WTC11 (cell line): ENCODE measurements at regions of chr2 and their contacts with region 1.

Region 1: GRCh38 chr2:44770221-44771195 is 171.0 kb upstream of the SIX3 start:
- DNase-seq: peak; percentile 38
- ATAC-seq: peak; percentile 33; the same call in 1 of the 2 replicates
- H3K4me3 Mint-ChIP-seq: no peak overlapping the region
- H3K27ac Mint-ChIP-seq: no peak overlapping the region; the same call in 1 of the 2 replicates
- H3K4me1 Mint-ChIP-seq: peaks cover 71% of the 10 kb centered on the region
- H3K27me3 Mint-ChIP-seq: peaks cover 28% of the 10 kb centered on the region
- CTCF ChIP-seq: no peak

Region 2: GRCh38 chr2:44789971-44790721 is 19.6 kb after region 1 on chr2:
- CTCF ChIA-PET with region 1: interaction called, 18 read pairs
- POLR2A ChIA-PET with region 1: interaction called, 3 read pairs
- DNase-seq: no peak
- ATAC-seq: peak; percentile 81
- H3K4me3 Mint-ChIP-seq: no peak overlapping the region
- H3K27ac Mint-ChIP-seq: peak overlapping the region; percentile 26
- H3K4me1 Mint-ChIP-seq: peaks cover 42% of the 10 kb centered on the region
- H3K27me3 Mint-ChIP-seq: no peaks in the 10 kb centered on the region; the same call in none of the 2 replicates
- CTCF ChIP-seq: no peak

Region 3: GRCh38 chr2:44802777-44803424 is 32.4 kb after region 1 on chr2:
- CTCF ChIA-PET with region 1: interaction called, 11 read pairs
- POLR2A ChIA-PET with region 1: interaction called, 3 read pairs
- DNase-seq: peak; percentile 92
- ATAC-seq: peak; percentile 75
- H3K4me3 Mint-ChIP-seq: peak overlapping the region; percentile 70
- H3K27ac Mint-ChIP-seq: peak overlapping the region; percentile 98
- H3K4me1 Mint-ChIP-seq: peaks cover 82% of the 10 kb centered on the region
- H3K27me3 Mint-ChIP-seq: peaks cover 53% of the 10 kb centered on the region
- CTCF ChIP-seq: no peak

Region 4: DNA sequence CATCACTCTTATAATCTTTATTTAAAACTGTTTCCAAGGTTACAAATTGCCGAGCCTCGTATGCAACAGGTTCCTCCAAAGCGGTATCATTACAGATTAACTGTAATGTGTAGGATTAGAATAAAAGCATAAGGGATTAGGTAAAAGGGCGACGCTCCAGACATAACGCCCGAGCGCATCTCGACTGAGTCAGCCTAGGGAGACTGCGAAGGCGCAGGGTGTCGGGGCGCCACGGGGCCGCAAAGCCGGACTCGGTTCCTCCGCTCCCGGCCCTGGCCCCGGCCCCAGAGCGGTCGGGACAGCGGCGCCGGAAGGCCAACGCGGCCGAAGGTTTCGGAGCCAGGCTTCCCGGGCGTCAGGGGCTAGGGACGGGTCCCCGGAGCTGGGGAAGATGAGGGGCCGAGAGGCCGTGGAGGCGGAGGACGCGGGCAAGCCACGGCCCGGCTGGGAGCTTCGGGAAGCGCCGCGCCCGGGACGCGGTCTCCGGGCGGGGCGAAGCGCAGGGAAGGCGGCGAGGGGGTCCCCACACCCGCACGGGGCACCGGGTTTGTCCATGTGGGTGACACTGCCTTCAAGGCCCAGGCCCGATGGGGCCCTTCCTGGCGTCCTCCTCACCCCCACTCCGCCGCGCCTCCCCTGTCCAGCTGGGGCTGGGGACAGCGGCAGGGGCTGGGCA is 158.1 kb after region 1 on chr2:
- CTCF ChIA-PET with region 1: interaction called, 14 read pairs
- POLR2A ChIA-PET with region 1: no interaction called
- DNase-seq: peak; percentile 58
- ATAC-seq: peak; percentile 8
- H3K4me3 Mint-ChIP-seq: peak overlapping the region; percentile 64
- H3K27ac Mint-ChIP-seq: no peak overlapping the region
- H3K4me1 Mint-ChIP-seq: peaks cover 71% of the 10 kb centered on the region
- H3K27me3 Mint-ChIP-seq: peaks cover 95% of the 10 kb centered on the region
- CTCF ChIP-seq: no peak

Region 5: GRCh38 chr2:44937688-44938240 is 167.3 kb after region 1 on chr2:
- CTCF ChIA-PET with region 1: interaction called, 17 read pairs
- POLR2A ChIA-PET with region 1: interaction called, 4 read pairs
- DNase-seq: peak; percentile 79
- ATAC-seq: peak; percentile 5
- H3K4me3 Mint-ChIP-seq: peak overlapping the region; percentile 77
- H3K27ac Mint-ChIP-seq: no peak overlapping the region
- H3K4me1 Mint-ChIP-seq: peaks cover 41% of the 10 kb centered on the region
- H3K27me3 Mint-ChIP-seq: peaks cover 95% of the 10 kb centered on the region
- CTCF ChIP-seq: no peak